Right cardiac atrium (tissue), 5 donors: ENCODE measurements at regions of chr5 and their contacts with region 1.

Region 1: DNA sequence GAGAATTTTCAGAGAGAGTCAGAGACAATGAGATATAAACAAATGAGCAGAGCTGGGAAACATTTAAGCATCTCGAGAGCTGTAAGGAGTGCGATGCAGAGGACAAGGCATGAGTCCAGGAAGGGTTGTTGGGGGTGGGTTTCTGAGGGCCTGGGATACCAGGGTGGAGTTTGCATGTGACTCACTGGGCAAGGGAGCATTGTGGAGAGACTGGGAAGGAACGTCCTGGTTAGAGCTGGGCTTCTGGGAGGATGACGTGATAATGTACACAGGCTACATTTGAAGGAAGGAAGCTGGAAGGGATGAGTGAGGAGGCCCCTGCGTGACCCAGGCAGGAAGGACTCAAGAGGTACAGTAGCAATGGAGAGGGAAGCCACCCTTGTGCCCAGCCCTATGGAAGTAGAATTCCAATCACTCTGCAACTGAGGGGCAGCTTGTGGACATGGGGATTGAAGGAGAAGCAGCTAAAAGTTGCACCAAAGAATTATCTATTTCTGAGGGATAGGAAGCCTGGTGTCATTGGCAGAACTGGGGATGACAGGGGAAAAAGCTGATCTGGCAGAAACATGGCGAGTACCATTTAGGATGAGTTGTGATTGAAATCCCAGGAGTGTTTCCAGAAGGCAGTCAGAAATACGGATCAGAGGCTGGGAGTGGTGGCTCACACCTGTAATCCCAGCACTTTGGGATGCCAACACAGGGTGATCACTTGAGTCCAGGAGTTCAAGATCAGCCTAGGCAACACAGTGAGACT is 59.3 kb upstream of the AFAP1L1 start:
- DNase-seq: peak in 1 of 3 donors; percentile 33
- ATAC-seq: peak in 1 of 2 donors; percentile 62
- H3K4me3 ChIP-seq: no peak overlapping the region
- H3K27ac ChIP-seq: no peak overlapping the region
- H3K4me1 ChIP-seq: peaks cover 15% of the 10 kb centered on the region
- H3K27me3 ChIP-seq: no peaks in the 10 kb centered on the region

Region 2: DNA sequence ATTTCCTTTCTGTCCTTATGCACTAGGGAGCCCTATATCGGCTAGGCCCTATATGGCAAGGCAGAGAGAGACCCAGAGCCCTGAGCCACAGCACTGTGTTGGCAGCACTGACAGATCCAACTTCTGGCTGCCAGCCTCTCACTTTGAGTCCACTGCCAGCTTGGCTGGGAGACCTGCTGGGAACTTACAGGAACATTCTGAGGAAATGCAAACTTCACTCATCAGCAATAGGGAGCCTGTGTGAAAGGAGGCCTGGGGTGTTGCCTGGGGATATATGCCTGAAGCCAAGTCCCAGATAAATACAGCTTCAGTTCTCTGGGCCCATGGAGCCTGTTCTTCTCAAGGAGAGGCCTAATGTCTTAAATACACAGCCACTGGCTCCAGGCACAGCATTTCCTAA is 307.9 kb before region 1 on chr5:
- intact Hi-C with region 1: no loop called
- DNase-seq: peak; percentile 56 to 71 (median 66)
- ATAC-seq: peak; percentile 84
- H3K4me3 ChIP-seq: no peak overlapping the region
- H3K27ac ChIP-seq: peak overlapping the region; percentile 38
- H3K4me1 ChIP-seq: peaks cover 3% of the 10 kb centered on the region
- H3K27me3 ChIP-seq: no peaks in the 10 kb centered on the region

Region 3: DNA sequence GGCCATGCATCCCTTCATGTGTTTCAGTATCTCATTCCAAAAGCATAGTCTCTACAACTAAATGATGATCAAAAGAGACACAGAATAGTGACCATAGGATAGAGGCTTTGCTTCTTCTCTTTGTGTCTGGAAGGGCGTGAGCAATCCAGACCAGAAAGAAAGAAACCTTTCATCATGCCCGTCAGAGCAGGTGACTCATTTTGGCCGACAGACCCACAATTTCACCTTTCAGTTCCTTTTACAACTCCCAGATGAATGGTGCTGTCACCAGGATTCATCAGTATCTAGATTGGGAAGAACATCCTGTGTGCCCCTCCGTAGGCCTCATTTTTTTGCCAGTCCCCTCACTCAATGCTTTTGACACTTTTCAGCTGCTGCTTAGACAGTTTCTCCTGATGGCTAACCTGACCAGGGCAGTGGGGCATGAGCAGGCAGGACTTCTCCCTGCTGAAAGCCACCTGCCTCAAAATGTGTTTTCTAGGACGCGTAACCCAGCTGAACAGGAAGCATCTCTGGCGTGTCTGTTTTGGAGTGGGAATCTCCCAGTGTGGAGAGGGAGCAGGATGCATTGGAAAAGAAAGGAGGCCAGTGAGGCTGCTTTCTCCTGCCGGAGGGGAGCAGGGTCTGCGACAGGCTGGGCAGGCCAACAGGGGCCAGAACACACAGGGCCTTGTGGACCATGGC is 49.8 kb before region 1 on chr5:
- intact Hi-C with region 1: loop called in 1 of 4 experiments (anchors 10 kb)
- DNase-seq: peak in 1 of 3 donors; percentile 55
- ATAC-seq: peak in 1 of 2 donors; percentile 23
- H3K4me3 ChIP-seq: no peak overlapping the region
- H3K27ac ChIP-seq: peak overlapping the region; percentile 62
- H3K4me1 ChIP-seq: peaks cover 27% of the 10 kb centered on the region
- H3K27me3 ChIP-seq: no peaks in the 10 kb centered on the region

Region 4: DNA sequence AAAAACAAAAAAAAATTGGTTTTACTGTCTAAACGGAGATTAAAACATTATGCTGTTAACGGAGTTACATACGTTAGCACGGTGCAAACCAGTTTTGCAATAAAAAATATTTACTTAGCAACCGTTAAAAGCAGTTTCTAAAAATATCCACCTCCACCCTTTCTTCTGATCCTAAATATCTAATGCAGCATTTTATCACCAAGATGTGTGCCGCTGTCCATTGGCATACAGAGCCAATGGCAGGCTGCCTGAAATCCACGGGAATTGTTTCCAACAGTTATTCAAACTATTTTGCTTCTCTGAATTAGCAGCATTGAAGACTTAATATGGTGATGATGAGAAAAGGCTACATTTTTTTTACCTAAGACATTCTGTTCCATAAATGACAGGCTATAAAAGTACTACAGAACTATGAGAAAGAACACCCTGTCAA is 277.2 kb after region 1 on chr5:
- intact Hi-C with region 1: no loop called
- DNase-seq: peak in 2 of 3 donors; percentile 68 to 85
- ATAC-seq: peak in 1 of 2 donors; percentile 5
- H3K4me3 ChIP-seq: no peak overlapping the region
- H3K27ac ChIP-seq: peak overlapping the region; percentile 55
- H3K4me1 ChIP-seq: peaks cover 9% of the 10 kb centered on the region
- H3K27me3 ChIP-seq: no peaks in the 10 kb centered on the region

Region 5: GRCh38 chr5:149540089-149540488 is 327.7 kb after region 1 on chr5:
- intact Hi-C with region 1: no loop called
- DNase-seq: no peak
- ATAC-seq: no peak
- H3K4me3 ChIP-seq: no peak overlapping the region
- H3K27ac ChIP-seq: no peak overlapping the region
- H3K4me1 ChIP-seq: peaks cover 5% of the 10 kb centered on the region
- H3K27me3 ChIP-seq: no peaks in the 10 kb centered on the region